Heart right ventricle (tissue), 16 donors: ENCODE measurements at regions of chr13 and their contacts with region 1.

Region 1: DNA sequence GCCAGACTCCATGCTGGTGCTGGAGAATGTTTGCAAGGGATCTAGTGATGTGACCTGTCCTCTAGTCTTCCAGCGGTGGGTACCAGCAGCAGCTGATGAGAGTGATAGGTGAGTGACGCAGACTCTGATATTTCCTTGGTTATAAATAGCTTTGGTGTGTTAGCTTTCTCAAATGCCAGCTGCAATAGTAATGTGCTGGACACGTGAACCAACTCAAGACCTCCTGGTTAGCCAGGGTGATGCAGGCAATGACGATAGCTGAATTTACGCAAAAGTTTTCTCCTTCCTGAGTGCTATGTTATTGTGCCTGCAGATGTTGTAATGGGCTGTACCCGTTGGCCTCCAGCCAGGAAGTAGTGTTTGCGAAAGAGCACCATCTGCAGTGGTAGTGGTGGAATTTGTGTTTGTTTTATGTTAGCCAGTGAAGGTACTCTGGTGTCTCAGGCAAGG is 129.5 kb downstream of the CYSLTR2 start:
- DNase-seq: peak; percentile 62 to 65
- ATAC-seq: peak; percentile 48 to 95 (median 90)
- H3K4me3 ChIP-seq: no peak overlapping the region
- H3K27ac ChIP-seq: peak overlapping the region in 8 of 10 donors; percentile 43 to 79 (median 51)
- H3K4me1 ChIP-seq: peaks cover 0 to 20% (median 0%) of the 10 kb centered on the region in 9 donors
- H3K27me3 ChIP-seq: no peaks in the 10 kb centered on the region
- CTCF ChIP-seq: peak in 1 of 9 donors; percentile 7

Region 2: GRCh38 chr13:48874165-48874564 is 91.0 kb after region 1 on chr13:
- intact Hi-C with region 1: loop called in 2 of 10 experiments (anchors 2 to 5 kb)
- DNase-seq: peak in 1 of 2 donors; percentile 47
- ATAC-seq: peak; percentile 86 to 99 (median 95)
- H3K4me3 ChIP-seq: no peak overlapping the region
- H3K27ac ChIP-seq: peak overlapping the region in 9 of 10 donors; percentile 22 to 62 (median 46)
- H3K4me1 ChIP-seq: peaks cover 0 to 26% (median 9%) of the 10 kb centered on the region in 9 donors
- H3K27me3 ChIP-seq: peaks cover 0 to 15% (median 7%) of the 10 kb centered on the region in 7 donors
- CTCF ChIP-seq: no peak

Region 3: DNA sequence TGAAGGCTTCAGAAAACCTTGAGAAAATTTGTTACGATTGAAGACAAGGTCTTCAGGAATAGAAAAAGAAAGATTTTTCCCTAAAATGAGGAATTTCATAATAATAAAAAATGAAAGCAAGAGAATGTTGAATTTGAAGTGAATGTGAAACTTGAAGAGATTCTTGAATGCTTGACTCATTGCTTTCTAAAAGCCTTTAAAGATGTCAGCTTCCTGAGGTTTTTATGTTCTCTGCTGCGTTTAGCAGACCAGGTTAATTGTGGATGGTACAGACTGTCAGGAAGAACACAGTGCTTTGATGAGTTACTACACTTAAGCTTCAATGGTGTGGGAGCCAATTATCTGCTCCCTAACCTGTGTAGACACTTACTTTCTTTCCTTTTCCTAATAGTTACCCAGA is 96.2 kb after region 1 on chr13:
- intact Hi-C with region 1: loop called in 2 of 10 experiments (anchors 2 to 5 kb)
- DNase-seq: no peak
- ATAC-seq: no peak
- H3K4me3 ChIP-seq: no peak overlapping the region
- H3K27ac ChIP-seq: no peak overlapping the region
- H3K4me1 ChIP-seq: peaks cover 0 to 22% (median 7%) of the 10 kb centered on the region in 9 donors
- H3K27me3 ChIP-seq: peaks cover 0 to 15% (median 7%) of the 10 kb centered on the region in 7 donors
- CTCF ChIP-seq: no peak

Region 4: GRCh38 chr13:49098771-49099512 is 315.7 kb after region 1 on chr13:
- intact Hi-C with region 1: loop called in 2 of 10 experiments (anchors 10 kb)
- DNase-seq: no peak
- ATAC-seq: peak in 4 of 8 donors; percentile 59 to 68 (median 62)
- H3K4me3 ChIP-seq: no peak overlapping the region
- H3K27ac ChIP-seq: peak overlapping the region; percentile 37 to 84 (median 76)
- H3K4me1 ChIP-seq: peaks cover 10 to 40% (median 30%) of the 10 kb centered on the region in 9 donors
- H3K27me3 ChIP-seq: no peaks in the 10 kb centered on the region
- CTCF ChIP-seq: peak; percentile 11 to 69 (median 50)